ENCODE measurements at regions of chr3 and their contacts with region 1.

Region 1: DNA sequence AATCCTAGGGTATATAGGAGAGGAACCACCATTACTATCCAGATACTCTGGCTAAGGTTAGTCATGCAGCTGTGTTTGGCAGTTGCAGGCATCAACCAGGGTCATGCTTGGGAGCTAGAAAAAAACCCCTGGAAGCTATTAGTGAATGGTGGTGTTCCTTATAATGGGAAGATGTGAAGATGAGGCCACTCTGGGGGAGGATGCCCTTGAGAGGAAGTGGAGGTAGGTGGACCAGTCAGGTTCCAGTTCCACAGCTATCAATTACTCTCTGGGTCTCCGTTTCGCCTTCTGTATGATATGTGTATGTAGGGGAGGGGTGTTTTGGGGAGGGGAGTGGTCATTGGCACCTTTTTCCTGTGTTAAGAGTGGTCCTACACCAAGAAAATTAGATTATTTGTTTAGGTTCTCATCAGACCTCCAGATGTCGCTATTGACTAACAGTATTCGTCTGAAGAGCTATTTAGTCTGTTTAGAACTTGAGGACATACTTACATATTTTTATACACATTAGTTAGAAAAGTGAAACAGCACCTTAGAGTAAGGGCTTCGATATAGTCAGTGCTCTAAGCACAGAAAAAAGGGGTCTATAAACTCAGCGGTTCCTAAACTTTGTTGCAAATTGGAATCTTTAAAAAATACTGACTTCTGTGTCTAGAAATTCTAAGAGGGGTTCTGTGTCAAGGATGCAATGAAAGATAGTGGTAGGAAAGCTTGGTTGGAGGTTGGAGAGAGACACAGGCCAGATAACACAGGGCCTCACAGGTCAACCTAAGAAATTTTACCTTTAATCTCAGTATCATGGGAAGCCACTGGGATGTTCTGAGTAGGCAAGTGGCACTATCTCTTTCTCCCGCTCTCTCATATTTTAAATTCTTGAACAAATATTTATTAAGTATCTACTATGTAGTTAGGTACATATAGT is 9.1 kb upstream of the HPS3 start:
- DNase-seq: peak; percentile 76
- ATAC-seq: peak; percentile 85
- H3K4me3 ChIP-seq: no peak overlapping the region
- H3K27ac ChIP-seq: no peak overlapping the region
- H3K4me1 ChIP-seq: no peaks in the 10 kb centered on the region
- H3K27me3 ChIP-seq: no peaks in the 10 kb centered on the region
- CTCF ChIP-seq: peak; percentile 79
- POLR2A ChIP-seq: no peak
- RAD21 ChIP-seq: peak; percentile 86

Region 2: DNA sequence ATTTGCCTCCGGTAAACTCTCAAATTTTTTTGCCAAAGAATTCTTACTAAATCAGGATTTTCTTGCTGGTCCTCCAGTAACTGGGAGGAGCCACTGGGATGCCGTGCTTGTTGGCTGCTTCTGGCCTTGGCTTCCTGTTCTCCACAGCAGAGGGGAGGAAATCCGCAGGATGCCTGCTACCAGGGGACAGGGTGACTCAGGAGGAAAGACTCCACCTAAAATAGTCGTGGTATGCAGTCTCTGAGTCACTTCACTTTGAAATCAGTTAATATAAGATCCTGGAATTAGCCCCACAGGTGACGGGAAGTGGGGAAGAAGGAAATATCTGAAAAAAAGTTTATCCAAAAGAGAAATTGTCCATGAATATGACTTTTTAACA is 219.6 kb after region 1 on chr3:
- CTCF ChIA-PET with region 1: no interaction called
- POLR2A ChIA-PET with region 1: no interaction called
- dilution Hi-C with region 1: no loop called
- in situ Hi-C with region 1: no loop called
- intact Hi-C with region 1: loop called (anchors 2 kb)
- DNase-seq: peak; percentile 97
- ATAC-seq: peak; percentile 94
- H3K4me3 ChIP-seq: no peak overlapping the region
- H3K27ac ChIP-seq: peak overlapping the region; percentile 56
- H3K4me1 ChIP-seq: peaks cover 14% of the 10 kb centered on the region
- H3K27me3 ChIP-seq: no peaks in the 10 kb centered on the region
- CTCF ChIP-seq: no peak
- POLR2A ChIP-seq: no peak
- RAD21 ChIP-seq: no peak